ENCODE measurements at regions of chr2 and their contacts with region 1.

Region 1: GRCh38 chr2:136423516-136423996 is 305.6 kb upstream of the CXCR4 start:
- DNase-seq: peak; percentile 84 to 87
- H3K4me3 ChIP-seq: peak overlapping the region; percentile 57
- H3K4me3 Mint-ChIP-seq: peak overlapping the region; percentile 80
- H3K27ac Mint-ChIP-seq: peak overlapping the region; percentile 71
- H3K4me1 ChIP-seq: 0 out of 2 replicates have a peak, but pooled peaks cover 10% of the 10 kb centered on the region
- H3K4me1 Mint-ChIP-seq: peaks cover 17% of the 10 kb centered on the region
- H3K27me3 ChIP-seq: no peaks in the 10 kb centered on the region
- H3K27me3 Mint-ChIP-seq: peaks cover 2% of the 10 kb centered on the region
- CTCF ChIP-seq: peak; percentile 77 to 91

Region 2: GRCh38 chr2:136434251-136434715 is 10.7 kb after region 1 on chr2:
- CTCF ChIA-PET with region 1: no interaction called
- POLR2A ChIA-PET with region 1: no interaction called
- intact Hi-C with region 1: loop called (anchors 1 kb)
- DNase-seq: peak; percentile 58 to 72
- H3K4me3 ChIP-seq: no peak overlapping the region
- H3K4me3 Mint-ChIP-seq: no peak overlapping the region
- H3K27ac Mint-ChIP-seq: no peak overlapping the region
- H3K4me1 ChIP-seq: peaks cover 11% of the 10 kb centered on the region
- H3K4me1 Mint-ChIP-seq: no peaks in the 10 kb centered on the region
- H3K27me3 ChIP-seq: no peaks in the 10 kb centered on the region
- H3K27me3 Mint-ChIP-seq: no peaks in the 10 kb centered on the region
- CTCF ChIP-seq: no peak

Region 3: DNA sequence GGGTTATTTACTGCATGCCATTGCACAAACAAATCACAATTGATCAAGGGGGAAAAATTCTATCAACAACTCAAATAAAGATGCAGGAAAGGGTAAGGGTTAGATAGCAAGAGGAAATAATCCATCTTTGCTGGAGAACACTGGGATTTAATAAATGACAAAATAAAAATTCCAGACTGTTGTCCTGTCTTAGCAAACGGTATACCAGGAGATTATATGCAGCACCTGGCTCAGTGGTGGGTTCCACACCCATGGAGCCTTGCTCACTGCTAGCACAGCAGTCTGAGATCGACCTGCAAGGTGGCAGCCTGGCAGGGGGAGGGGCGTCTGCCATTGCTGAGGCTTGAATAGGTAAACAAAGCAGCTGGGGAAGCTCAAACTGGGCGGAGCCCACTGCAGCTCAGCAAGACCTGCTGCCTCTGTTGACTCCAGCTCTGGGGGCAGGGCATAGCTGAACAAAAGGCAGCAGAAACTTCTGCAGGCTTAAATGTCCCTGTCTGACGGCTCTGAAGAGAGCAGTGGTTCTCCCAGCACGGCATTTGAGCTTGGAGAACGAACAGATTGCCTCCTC is 45.3 kb after region 1 on chr2:
- CTCF ChIA-PET with region 1: no interaction called
- POLR2A ChIA-PET with region 1: no interaction called
- intact Hi-C with region 1: no loop called
- DNase-seq: peak; percentile 9 to 41
- H3K4me3 ChIP-seq: no peak overlapping the region
- H3K4me3 Mint-ChIP-seq: no peak overlapping the region
- H3K27ac Mint-ChIP-seq: no peak overlapping the region
- H3K4me1 ChIP-seq: no peaks in the 10 kb centered on the region
- H3K4me1 Mint-ChIP-seq: no peaks in the 10 kb centered on the region
- H3K27me3 ChIP-seq: no peaks in the 10 kb centered on the region
- H3K27me3 Mint-ChIP-seq: peaks cover 5% of the 10 kb centered on the region
- CTCF ChIP-seq: no peak

Region 4: GRCh38 chr2:136665736-136666135 is 242.2 kb after region 1 on chr2:
- CTCF ChIA-PET with region 1: no interaction called
- POLR2A ChIA-PET with region 1: no interaction called
- intact Hi-C with region 1: loop called (anchors 1 kb)
- DNase-seq: no peak
- H3K4me3 ChIP-seq: no peak overlapping the region
- H3K4me3 Mint-ChIP-seq: no peak overlapping the region
- H3K27ac Mint-ChIP-seq: no peak overlapping the region
- H3K4me1 ChIP-seq: no peaks in the 10 kb centered on the region; the same call in 1 of the 2 replicates
- H3K4me1 Mint-ChIP-seq: no peaks in the 10 kb centered on the region
- H3K27me3 ChIP-seq: no peaks in the 10 kb centered on the region
- H3K27me3 Mint-ChIP-seq: no peaks in the 10 kb centered on the region
- CTCF ChIP-seq: no peak

Region 5: GRCh38 chr2:136796339-136796738 is 372.8 kb after region 1 on chr2:
- CTCF ChIA-PET with region 1: no interaction called
- POLR2A ChIA-PET with region 1: no interaction called
- intact Hi-C with region 1: loop called (anchors 5 kb)
- DNase-seq: no peak
- H3K4me3 ChIP-seq: no peak overlapping the region
- H3K4me3 Mint-ChIP-seq: no peak overlapping the region
- H3K27ac Mint-ChIP-seq: no peak overlapping the region
- H3K4me1 ChIP-seq: peaks cover 11% of the 10 kb centered on the region; the same call in 1 of the 2 replicates
- H3K4me1 Mint-ChIP-seq: no peaks in the 10 kb centered on the region
- H3K27me3 ChIP-seq: no peaks in the 10 kb centered on the region
- H3K27me3 Mint-ChIP-seq: no peaks in the 10 kb centered on the region
- CTCF ChIP-seq: peak; percentile 15 to 30

Region 6: GRCh38 chr2:137050949-137051348 is 627.4 kb after region 1 on chr2:
- CTCF ChIA-PET with region 1: no interaction called
- POLR2A ChIA-PET with region 1: no interaction called
- intact Hi-C with region 1: loop called (anchors 2 kb)
- DNase-seq: peak in 1 of 2 experiments; percentile 9
- H3K4me3 ChIP-seq: no peak overlapping the region
- H3K4me3 Mint-ChIP-seq: no peak overlapping the region
- H3K27ac Mint-ChIP-seq: no peak overlapping the region
- H3K4me1 ChIP-seq: peaks cover 14% of the 10 kb centered on the region
- H3K4me1 Mint-ChIP-seq: peaks cover 12% of the 10 kb centered on the region
- H3K27me3 ChIP-seq: no peaks in the 10 kb centered on the region
- H3K27me3 Mint-ChIP-seq: no peaks in the 10 kb centered on the region
- CTCF ChIP-seq: peak; percentile 48 to 51

Measured in Caco-2 (cell line).